ENCODE measurements at regions of chr14 and their contacts with region 1.

Region 1: GRCh38 chr14:24093901-24094761 is at the start of gene PCK2:
- DNase-seq: peak; percentile 92 to 98 (median 94)
- ATAC-seq: peak; percentile 84 to 90 (median 88)
- H3K4me3 ChIP-seq: peak within 1 kb of the TSS; percentile 75 to 94 (median 84)
- H3K27ac ChIP-seq: peak within 1 kb of the TSS; percentile 91 to 96 (median 94)
- H3K4me1 ChIP-seq: peaks cover 10 to 26% (median 14%) of the 10 kb centered on the region in 3 donors
- H3K27me3 ChIP-seq: no peaks in the 10 kb centered on the region
- CTCF ChIP-seq: no peak
- total RNA-seq, gene PCK2: 18.6 to 146 (median 23.1) TPM

Region 2: GRCh38 chr14:24058260-24058950 is 35.7 kb before region 1 on chr14:
- intact Hi-C with region 1: loop called in 2 of 3 experiments (anchors 5 kb)
- DNase-seq: peak; percentile 33 to 85 (median 76)
- ATAC-seq: peak; percentile 78 to 95 (median 90)
- H3K4me3 ChIP-seq: no peak overlapping the region
- H3K27ac ChIP-seq: no peak overlapping the region
- H3K4me1 ChIP-seq: peaks cover 8 to 13% (median 9%) of the 10 kb centered on the region in 3 donors
- H3K27me3 ChIP-seq: no peaks in the 10 kb centered on the region
- CTCF ChIP-seq: peak; percentile 22 to 73 (median 67)

Measured in pancreas (tissue), 10 donors.